Posterior cingulate gyrus (tissue), 11 donors: ENCODE measurements at regions of chr2 and their contacts with region 1.

Region 1: DNA sequence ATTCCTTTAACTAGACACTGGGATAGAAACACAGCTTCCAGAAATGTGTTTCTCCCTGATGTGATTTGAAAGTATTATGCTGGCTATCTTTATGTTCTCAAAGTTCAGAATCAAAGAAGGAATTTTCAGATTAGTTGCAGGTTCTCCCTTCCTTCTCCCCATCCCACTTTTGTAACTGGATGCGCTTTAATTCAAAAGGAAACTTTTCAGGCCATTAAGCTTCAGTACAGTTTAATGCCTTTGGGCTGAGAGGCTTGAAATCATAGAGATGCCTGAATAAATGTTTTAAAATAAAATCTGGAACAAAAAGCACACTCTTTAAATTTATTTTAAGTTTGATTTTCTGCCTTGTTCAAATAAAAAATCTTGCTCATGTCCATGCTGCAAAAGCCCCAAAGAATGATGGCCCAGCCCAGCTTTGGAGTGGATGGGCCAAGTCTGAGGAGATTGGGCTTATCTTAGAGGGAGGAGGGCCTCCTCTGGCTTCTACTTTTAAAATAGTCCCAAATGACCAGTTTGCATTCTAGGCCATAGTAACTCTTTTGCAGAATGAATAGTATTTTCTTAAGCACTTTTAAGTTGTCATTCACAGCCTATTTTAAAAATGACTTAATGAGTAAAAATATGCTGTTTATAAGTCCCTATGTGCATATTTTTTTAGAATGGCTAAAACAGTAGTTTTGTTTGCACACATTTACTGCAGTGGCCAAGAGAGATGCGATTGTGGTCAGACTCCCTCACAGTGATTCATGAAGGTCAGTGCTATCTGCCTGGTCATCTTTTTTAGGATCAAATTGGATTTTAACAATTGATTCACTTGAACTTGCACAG is 129.2 kb downstream of the MTX2 start:
- DNase-seq: no peak

Region 2: GRCh38 chr2:176409671-176410070 is 11.2 kb after region 1 on chr2:
- intact Hi-C with region 1: loop called (anchors 1 kb)
- DNase-seq: no peak

Region 3: GRCh38 chr2:176745543-176746200 is 347.2 kb after region 1 on chr2:
- intact Hi-C with region 1: loop called (anchors 10 kb)
- DNase-seq: no peak